MCF 10A (cell line): ENCODE measurements at regions of chr14 and their contacts with region 1.

Region 1: GRCh38 chr14:51369814-51370213 is 129.8 kb downstream of the TMX1 start:
- DNase-seq: peak; percentile 55
- H3K4me3 Mint-ChIP-seq: no peak overlapping the region
- H3K27ac Mint-ChIP-seq: no peak overlapping the region
- H3K4me1 Mint-ChIP-seq: peaks cover 20% of the 10 kb centered on the region
- H3K27me3 Mint-ChIP-seq: no peaks in the 10 kb centered on the region
- CTCF ChIP-seq: peak; percentile 47

Region 2: DNA sequence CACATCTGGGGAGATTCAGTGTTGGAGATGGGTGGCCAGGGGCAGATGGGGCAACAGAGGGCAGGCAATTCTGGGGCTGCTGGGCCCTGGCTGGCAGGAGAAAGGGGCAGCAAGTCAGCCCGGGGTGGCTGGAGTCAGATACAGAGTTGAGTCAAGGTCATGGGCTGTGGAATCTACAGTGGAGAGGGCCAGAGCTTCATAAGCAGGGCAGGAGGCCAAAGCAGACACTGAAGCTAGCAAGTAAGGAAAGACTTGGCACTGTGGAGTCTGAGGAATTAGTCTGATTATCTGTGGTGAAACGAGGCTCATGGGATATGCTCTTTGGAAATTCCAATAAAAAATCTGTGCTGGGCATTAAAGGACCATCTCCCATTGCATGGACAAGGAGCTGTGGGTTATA is 34.3 kb before region 1 on chr14:
- CTCF ChIA-PET with region 1: no interaction called
- POLR2A ChIA-PET with region 1: interaction called, 12 read pairs
- intact Hi-C with region 1: no loop called
- DNase-seq: no peak
- H3K4me3 Mint-ChIP-seq: no peak overlapping the region
- H3K27ac Mint-ChIP-seq: peak overlapping the region; percentile 84
- H3K4me1 Mint-ChIP-seq: peaks cover 51% of the 10 kb centered on the region
- H3K27me3 Mint-ChIP-seq: no peaks in the 10 kb centered on the region
- CTCF ChIP-seq: no peak